CD4-positive, alpha-beta T cell (primary cell): ENCODE measurements at regions of chr14 and their contacts with region 1.

Region 1: GRCh38 chr14:23929822-23930294 is 23.7 kb upstream of the DHRS4 start:
- DNase-seq: peak; percentile 65 to 92 (median 84)
- ATAC-seq: peak; percentile 93
- H3K4me3 ChIP-seq: no peak overlapping the region
- H3K4me3 Mint-ChIP-seq: no peak overlapping the region
- H3K27ac ChIP-seq: no peak overlapping the region
- H3K27ac Mint-ChIP-seq: no peak overlapping the region
- H3K4me1 ChIP-seq: peaks cover 4% of the 10 kb centered on the region
- H3K4me1 Mint-ChIP-seq: no peaks in the 10 kb centered on the region
- H3K27me3 ChIP-seq: peaks cover 0 to 6% of the 10 kb centered on the region in 2 experiments
- H3K27me3 Mint-ChIP-seq: peaks cover 6% of the 10 kb centered on the region
- CTCF ChIP-seq: peak; percentile 95

Region 2: GRCh38 chr14:23588884-23589598 is 340.8 kb before region 1 on chr14:
- CTCF ChIA-PET with region 1: interaction called, 6 read pairs
- POLR2A ChIA-PET with region 1: interaction called, 3 read pairs
- intact Hi-C with region 1: loop called (anchors 1 kb)
- DNase-seq: peak; percentile 71 to 91 (median 74)
- ATAC-seq: peak; percentile 99
- H3K4me3 ChIP-seq: no peak overlapping the region
- H3K4me3 Mint-ChIP-seq: no peak overlapping the region
- H3K27ac ChIP-seq: no peak overlapping the region
- H3K27ac Mint-ChIP-seq: no peak overlapping the region
- H3K4me1 ChIP-seq: peaks cover 11% of the 10 kb centered on the region
- H3K4me1 Mint-ChIP-seq: peaks cover 12% of the 10 kb centered on the region
- H3K27me3 ChIP-seq: no peaks in the 10 kb centered on the region
- H3K27me3 Mint-ChIP-seq: peaks cover 31% of the 10 kb centered on the region
- CTCF ChIP-seq: peak; percentile 87

Region 3: DNA sequence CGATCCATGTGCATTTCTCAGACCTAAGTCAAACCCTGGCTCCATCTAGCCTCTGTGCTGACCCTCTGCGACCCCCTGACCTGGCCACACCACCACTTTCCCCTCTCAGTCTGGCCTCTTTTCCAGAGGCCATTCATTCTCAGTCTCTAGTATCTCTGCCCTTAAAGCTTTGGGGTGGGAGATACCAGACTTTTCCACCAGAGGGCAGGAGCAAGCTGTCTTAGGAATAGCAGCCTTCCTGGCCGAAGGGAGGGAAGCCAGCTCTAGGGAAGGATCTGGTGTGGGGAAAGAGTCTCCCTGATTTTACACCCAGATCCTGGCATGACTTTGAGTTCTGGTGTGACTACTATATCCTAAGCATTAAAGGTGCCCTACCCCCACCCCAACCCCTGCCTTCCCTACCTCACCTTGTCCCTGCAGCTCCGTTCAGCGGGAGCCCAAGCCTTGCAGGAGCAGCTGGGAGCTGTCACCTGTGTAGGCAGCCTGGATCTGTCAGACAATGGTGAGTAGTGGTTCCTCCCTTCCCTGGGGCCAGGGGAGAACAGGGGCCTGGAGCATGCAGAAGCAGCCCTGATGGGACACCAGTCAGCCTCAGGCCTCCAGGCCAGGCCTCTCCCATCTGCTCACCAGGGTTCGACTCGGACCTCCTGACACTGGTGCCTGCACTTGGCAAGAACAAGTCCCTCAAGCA is 128.5 kb after region 1 on chr14:
- CTCF ChIA-PET with region 1: no interaction called
- POLR2A ChIA-PET with region 1: no interaction called
- intact Hi-C with region 1: no loop called
- DNase-seq: peak in 6 of 14 experiments; percentile 30 to 82 (median 48)
- ATAC-seq: peak; percentile 83
- H3K4me3 ChIP-seq: no peak overlapping the region
- H3K4me3 Mint-ChIP-seq: no peak overlapping the region
- H3K27ac ChIP-seq: no peak overlapping the region
- H3K27ac Mint-ChIP-seq: no peak overlapping the region
- H3K4me1 ChIP-seq: peaks cover 2% of the 10 kb centered on the region
- H3K4me1 Mint-ChIP-seq: no peaks in the 10 kb centered on the region
- H3K27me3 ChIP-seq: peaks cover 0 to 10% of the 10 kb centered on the region in 2 experiments
- H3K27me3 Mint-ChIP-seq: peaks cover 10% of the 10 kb centered on the region
- CTCF ChIP-seq: peak; percentile 70

Region 4: GRCh38 chr14:24241829-24242443 is 312.1 kb after region 1 on chr14:
- CTCF ChIA-PET with region 1: no interaction called
- POLR2A ChIA-PET with region 1: no interaction called
- intact Hi-C with region 1: no loop called
- DNase-seq: peak; percentile 85 to 97 (median 92)
- ATAC-seq: peak; percentile 80
- H3K4me3 ChIP-seq: peak overlapping the region; percentile 93
- H3K4me3 Mint-ChIP-seq: peak overlapping the region; percentile 99
- H3K27ac ChIP-seq: peak overlapping the region; percentile 97 to 100
- H3K27ac Mint-ChIP-seq: peak overlapping the region; percentile 100
- H3K4me1 ChIP-seq: peaks cover 63% of the 10 kb centered on the region
- H3K4me1 Mint-ChIP-seq: peaks cover 69% of the 10 kb centered on the region
- H3K27me3 ChIP-seq: no peaks in the 10 kb centered on the region
- H3K27me3 Mint-ChIP-seq: no peaks in the 10 kb centered on the region
- CTCF ChIP-seq: no peak

Region 5: DNA sequence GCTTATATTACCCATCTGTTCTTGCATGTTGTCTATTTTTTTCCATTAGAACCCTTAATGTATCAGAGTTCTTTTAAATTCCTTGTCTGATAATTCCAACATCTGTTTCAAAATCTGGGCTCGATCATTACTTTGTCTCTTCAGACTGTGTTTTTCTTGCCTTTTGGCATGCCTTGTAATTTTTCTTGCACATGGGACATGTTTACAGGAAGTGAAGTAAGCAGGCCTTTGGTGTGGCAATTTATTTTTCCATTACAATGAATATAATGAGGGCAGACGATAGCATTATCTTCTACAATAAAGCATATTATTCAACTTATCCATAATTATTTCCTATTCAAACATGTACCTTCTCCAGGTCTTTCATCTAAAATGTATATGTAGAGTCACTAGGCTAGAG is 1071.7 kb after region 1 on chr14:
- CTCF ChIA-PET with region 1: no interaction called
- POLR2A ChIA-PET with region 1: no interaction called
- intact Hi-C with region 1: no loop called
- DNase-seq: no peak
- ATAC-seq: no peak
- H3K4me3 ChIP-seq: no peak overlapping the region
- H3K4me3 Mint-ChIP-seq: no peak overlapping the region
- H3K27ac ChIP-seq: no peak overlapping the region
- H3K27ac Mint-ChIP-seq: no peak overlapping the region
- H3K4me1 ChIP-seq: no peaks in the 10 kb centered on the region
- H3K4me1 Mint-ChIP-seq: no peaks in the 10 kb centered on the region
- H3K27me3 ChIP-seq: no peaks in the 10 kb centered on the region
- H3K27me3 Mint-ChIP-seq: peaks cover 6% of the 10 kb centered on the region
- CTCF ChIP-seq: no peak